Naive thymus-derived CD4-positive, alpha-beta T cell (primary cell): ENCODE measurements at regions of chr6 and their contacts with region 1.

Region 1: DNA sequence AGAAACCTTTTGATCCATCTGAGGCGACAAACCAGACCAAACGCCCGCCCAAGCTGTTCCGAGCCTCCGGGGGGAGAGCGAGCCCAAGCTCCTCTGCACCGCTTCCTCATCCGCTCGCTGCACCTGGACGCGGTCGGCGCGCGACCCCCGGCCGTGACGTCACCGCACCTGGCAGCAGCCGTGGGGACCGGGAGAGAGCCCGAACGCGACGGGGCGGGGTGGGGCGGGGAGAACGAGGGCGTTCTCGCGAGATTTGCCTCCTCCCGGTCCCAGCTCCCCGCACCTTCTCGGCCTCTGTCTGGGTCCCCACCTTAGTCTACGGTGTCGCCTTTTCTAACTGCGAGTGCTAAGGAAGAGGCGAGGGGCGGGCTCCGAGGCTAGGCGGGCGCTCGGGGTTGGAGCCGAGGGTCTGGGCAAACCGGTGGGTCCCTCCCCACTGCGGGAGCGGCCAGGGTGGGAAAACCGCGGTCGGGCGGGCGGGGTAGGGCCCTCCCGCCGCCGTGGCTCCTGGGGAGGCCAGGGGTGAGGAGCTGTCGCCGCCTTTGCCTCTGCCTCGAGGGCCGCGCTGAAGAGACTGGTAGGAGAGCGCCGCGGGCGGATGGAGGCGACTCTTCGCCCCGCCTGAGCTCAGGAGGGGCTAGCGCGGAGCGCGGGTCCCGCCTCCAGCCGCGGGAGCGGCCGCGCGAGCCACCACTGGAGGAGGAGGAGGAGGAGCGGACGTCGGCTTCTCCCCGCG is at the start of gene CD2AP:
- DNase-seq: peak; percentile 72 to 91 (median 88)
- ATAC-seq: peak; percentile 90
- H3K4me3 ChIP-seq: peak within 1 kb of the TSS; percentile 82
- H3K4me3 Mint-ChIP-seq: peak within 1 kb of the TSS; percentile 95 to 100 (median 98)
- H3K27ac ChIP-seq: peak within 1 kb of the TSS; percentile 92
- H3K27ac Mint-ChIP-seq: peak within 1 kb of the TSS; percentile 96 to 100 (median 98)
- H3K4me1 ChIP-seq: peaks cover 11 to 19% of the 10 kb centered on the region in 2 donors
- H3K4me1 Mint-ChIP-seq: peaks cover 23 to 55% (median 47%) of the 10 kb centered on the region in 7 donors
- H3K27me3 ChIP-seq: no peaks in the 10 kb centered on the region
- H3K27me3 Mint-ChIP-seq: peaks cover 0 to 3% (median 0%) of the 10 kb centered on the region in 5 donors
- total RNA-seq, gene CD2AP: 21.8 to 37.0 (median 27.9) TPM

Region 2: GRCh38 chr6:46129629-46130511 is 1347.8 kb before region 1 on chr6 and contains the start of gene ENPP4:
- CTCF ChIA-PET with region 1: no interaction called
- POLR2A ChIA-PET with region 1: no interaction called
- intact Hi-C with region 1: loop called in 1 of 2 experiments (anchors 2 kb)
- DNase-seq: peak; percentile 78 to 98 (median 91)
- ATAC-seq: peak; percentile 100
- H3K4me3 ChIP-seq: peak within 1 kb of the TSS; percentile 98
- H3K4me3 Mint-ChIP-seq: peak within 1 kb of the TSS; percentile 94 to 99 (median 98)
- H3K27ac ChIP-seq: peak within 1 kb of the TSS; percentile 73
- H3K27ac Mint-ChIP-seq: peak within 1 kb of the TSS; percentile 86 to 97 (median 92)
- H3K4me1 ChIP-seq: peaks cover 15 to 18% of the 10 kb centered on the region in 2 donors
- H3K4me1 Mint-ChIP-seq: peaks cover 19 to 59% (median 46%) of the 10 kb centered on the region in 7 donors
- H3K27me3 ChIP-seq: no peaks in the 10 kb centered on the region
- H3K27me3 Mint-ChIP-seq: peaks cover 0 to 4% (median 0%) of the 10 kb centered on the region in 5 donors
- total RNA-seq, gene ENPP4: 3.8 to 9.8 (median 8.2) TPM

Region 3: DNA sequence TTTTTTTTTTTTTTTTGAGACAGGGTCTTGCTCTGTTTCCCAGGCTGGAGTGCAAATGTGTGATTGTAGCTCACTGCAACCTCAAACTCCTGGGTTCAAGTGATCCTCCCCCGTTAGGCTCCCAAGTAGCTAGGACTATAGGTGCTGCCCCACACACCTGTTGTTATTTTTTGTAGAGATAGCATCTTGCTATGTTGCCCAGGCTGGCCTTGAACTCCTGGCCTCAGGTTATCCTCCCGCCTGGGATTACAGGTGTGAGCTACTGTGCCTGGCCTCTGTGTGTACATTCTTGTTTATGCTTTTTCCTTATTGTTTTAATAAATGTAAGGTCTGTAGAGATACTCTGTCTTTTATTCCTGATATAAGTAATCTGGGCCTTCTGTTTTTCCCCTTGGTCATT is 14.7 kb after region 1 on chr6:
- CTCF ChIA-PET with region 1: no interaction called
- POLR2A ChIA-PET with region 1: interaction called, 20 read pairs
- intact Hi-C with region 1: loop called in 1 of 2 experiments (anchors 2 kb)
- DNase-seq: no peak
- ATAC-seq: no peak
- H3K4me3 ChIP-seq: no peak overlapping the region
- H3K4me3 Mint-ChIP-seq: peak overlapping the region in 1 of 10 donors; percentile 30
- H3K27ac ChIP-seq: no peak overlapping the region
- H3K27ac Mint-ChIP-seq: peak overlapping the region in 1 of 9 donors; percentile 12
- H3K4me1 ChIP-seq: peaks cover 0 to 12% of the 10 kb centered on the region in 2 donors
- H3K4me1 Mint-ChIP-seq: peaks cover 22 to 87% (median 77%) of the 10 kb centered on the region in 7 donors
- H3K27me3 ChIP-seq: no peaks in the 10 kb centered on the region
- H3K27me3 Mint-ChIP-seq: no peaks in the 10 kb centered on the region

Region 4: DNA sequence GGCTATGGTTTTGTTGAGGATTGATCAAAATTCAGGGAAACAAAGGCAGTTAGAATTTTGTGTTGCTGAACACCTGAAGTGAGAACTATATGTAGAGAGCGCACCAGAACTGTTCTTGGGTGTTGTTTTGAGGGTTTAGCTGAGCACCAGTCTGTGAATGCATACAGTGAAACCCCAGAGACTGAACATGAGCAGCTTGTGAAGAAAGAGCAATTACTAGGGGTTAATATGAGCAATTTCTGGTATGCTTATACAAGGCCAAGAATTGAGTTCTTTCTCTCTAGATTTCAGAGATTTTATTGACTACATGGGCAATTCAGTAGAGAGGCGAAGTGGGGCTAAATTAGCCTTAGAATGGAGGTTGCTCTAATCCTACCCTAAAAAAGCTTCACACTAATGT is 93.8 kb after region 1 on chr6:
- CTCF ChIA-PET with region 1: no interaction called
- POLR2A ChIA-PET with region 1: no interaction called
- intact Hi-C with region 1: no loop called
- DNase-seq: no peak
- ATAC-seq: no peak
- H3K4me3 ChIP-seq: no peak overlapping the region
- H3K4me3 Mint-ChIP-seq: no peak overlapping the region
- H3K27ac ChIP-seq: no peak overlapping the region
- H3K27ac Mint-ChIP-seq: no peak overlapping the region
- H3K4me1 ChIP-seq: no peaks in the 10 kb centered on the region
- H3K4me1 Mint-ChIP-seq: peaks cover 0 to 9% (median 3%) of the 10 kb centered on the region in 7 donors
- H3K27me3 ChIP-seq: no peaks in the 10 kb centered on the region
- H3K27me3 Mint-ChIP-seq: no peaks in the 10 kb centered on the region

Region 5: GRCh38 chr6:47587493-47587892 is 109.8 kb after region 1 on chr6:
- CTCF ChIA-PET with region 1: no interaction called
- POLR2A ChIA-PET with region 1: no interaction called
- intact Hi-C with region 1: loop called in 1 of 2 experiments (anchors 5 kb)
- DNase-seq: no peak
- ATAC-seq: no peak
- H3K4me3 ChIP-seq: no peak overlapping the region
- H3K4me3 Mint-ChIP-seq: no peak overlapping the region
- H3K27ac ChIP-seq: no peak overlapping the region
- H3K27ac Mint-ChIP-seq: peak overlapping the region in 1 of 9 donors; percentile 8
- H3K4me1 ChIP-seq: no peaks in the 10 kb centered on the region
- H3K4me1 Mint-ChIP-seq: peaks cover 0 to 5% (median 0%) of the 10 kb centered on the region in 7 donors
- H3K27me3 ChIP-seq: no peaks in the 10 kb centered on the region
- H3K27me3 Mint-ChIP-seq: no peaks in the 10 kb centered on the region

Region 6: GRCh38 chr6:47780510-47781356 is 303.1 kb after region 1 on chr6:
- CTCF ChIA-PET with region 1: no interaction called
- POLR2A ChIA-PET with region 1: no interaction called
- intact Hi-C with region 1: loop called in 1 of 2 experiments (anchors 1 kb)
- DNase-seq: peak in 7 of 9 donors; percentile 18 to 57 (median 41)
- ATAC-seq: peak; percentile 83
- H3K4me3 ChIP-seq: no peak overlapping the region
- H3K4me3 Mint-ChIP-seq: peak overlapping the region in 4 of 10 donors; percentile 6 to 47 (median 23)
- H3K27ac ChIP-seq: no peak overlapping the region
- H3K27ac Mint-ChIP-seq: peak overlapping the region in 2 of 9 donors; percentile 10 to 25
- H3K4me1 ChIP-seq: peaks cover 0 to 5% of the 10 kb centered on the region in 2 donors
- H3K4me1 Mint-ChIP-seq: peaks cover 0 to 11% (median 8%) of the 10 kb centered on the region in 7 donors
- H3K27me3 ChIP-seq: no peaks in the 10 kb centered on the region
- H3K27me3 Mint-ChIP-seq: peaks cover 0 to 44% (median 5%) of the 10 kb centered on the region in 5 donors